ENCODE measurements at regions of chr2 and their contacts with region 1.

Region 1: GRCh38 chr2:27683390-27684071 is 19.8 kb downstream of the SLC4A1AP start:
- DNase-seq: peak; percentile 69 to 94 (median 85)
- ATAC-seq: peak; percentile 92
- H3K4me3 ChIP-seq: no peak overlapping the region
- H3K4me3 Mint-ChIP-seq: peak overlapping the region; percentile 35
- H3K27ac ChIP-seq: peak overlapping the region in 1 of 2 experiments; percentile 58
- H3K27ac Mint-ChIP-seq: peak overlapping the region; percentile 66
- H3K4me1 ChIP-seq: peaks cover 3% of the 10 kb centered on the region
- H3K4me1 Mint-ChIP-seq: peaks cover 23% of the 10 kb centered on the region
- H3K27me3 ChIP-seq: no peaks in the 10 kb centered on the region
- H3K27me3 Mint-ChIP-seq: no peaks in the 10 kb centered on the region
- CTCF ChIP-seq: peak; percentile 100

Region 2: GRCh38 chr2:27095745-27096651 is 587.5 kb before region 1 on chr2:
- CTCF ChIA-PET with region 1: interaction called, 3 read pairs
- POLR2A ChIA-PET with region 1: no interaction called
- intact Hi-C with region 1: loop called in 1 of 2 experiments (anchors 10 kb)
- DNase-seq: peak in 5 of 9 experiments; percentile 32 to 69 (median 57)
- ATAC-seq: peak; percentile 88
- H3K4me3 ChIP-seq: peak overlapping the region; percentile 21 to 42
- H3K4me3 Mint-ChIP-seq: peak overlapping the region; percentile 61
- H3K27ac ChIP-seq: no peak overlapping the region
- H3K27ac Mint-ChIP-seq: no peak overlapping the region
- H3K4me1 ChIP-seq: peaks cover 9% of the 10 kb centered on the region
- H3K4me1 Mint-ChIP-seq: peaks cover 11% of the 10 kb centered on the region
- H3K27me3 ChIP-seq: no peaks in the 10 kb centered on the region
- H3K27me3 Mint-ChIP-seq: no peaks in the 10 kb centered on the region
- CTCF ChIP-seq: no peak

Region 3: DNA sequence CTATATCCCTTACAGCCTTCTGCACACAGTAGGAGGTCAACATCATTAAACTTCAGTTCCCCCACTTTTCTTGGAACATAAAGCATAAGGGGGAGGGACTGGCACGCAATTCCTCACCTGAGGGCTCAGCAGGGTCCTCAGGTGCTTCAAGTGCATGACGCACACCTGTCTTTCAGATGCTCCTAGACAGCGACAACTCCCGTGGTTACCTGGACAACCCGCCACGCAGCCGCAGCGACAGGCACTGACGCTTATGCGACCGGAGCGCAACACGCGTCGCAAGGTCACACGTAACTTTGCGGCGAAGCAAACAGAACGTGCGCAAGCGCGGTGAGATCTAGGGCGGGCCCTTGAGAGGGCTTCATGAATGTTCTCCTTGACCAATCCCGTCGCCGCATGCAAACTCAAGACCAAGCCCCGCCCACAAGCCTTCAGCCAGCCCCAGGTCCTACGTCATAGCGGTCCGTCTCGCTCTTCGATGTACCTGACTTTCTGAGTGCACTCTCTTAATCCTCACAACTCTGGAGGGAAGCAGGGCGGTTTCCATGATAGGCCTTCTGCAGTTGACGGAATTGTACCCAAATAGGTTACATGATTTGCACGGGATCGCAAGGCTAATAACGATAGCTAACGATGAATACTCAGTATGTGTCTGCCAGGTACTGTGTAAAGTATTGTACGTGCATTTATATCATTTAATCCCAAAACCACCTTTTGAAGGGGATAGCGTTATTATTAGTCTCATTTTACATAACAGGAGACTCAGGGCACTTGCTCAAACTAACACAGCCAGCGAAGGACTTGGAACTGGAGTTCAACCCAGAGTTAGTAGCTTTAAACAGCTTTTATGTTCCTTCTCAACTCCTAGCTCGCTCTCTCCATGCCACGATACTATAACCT is 193.8 kb before region 1 on chr2 and contains the start of gene IFT172:
- CTCF ChIA-PET with region 1: no interaction called
- POLR2A ChIA-PET with region 1: no interaction called
- intact Hi-C with region 1: loop called in 1 of 2 experiments (anchors 5 kb)
- DNase-seq: peak; percentile 98 to 100 (median 99)
- ATAC-seq: peak; percentile 91
- H3K4me3 ChIP-seq: peak within 1 kb of the TSS; percentile 53 to 57
- H3K4me3 Mint-ChIP-seq: peak within 1 kb of the TSS; percentile 82
- H3K27ac ChIP-seq: peak within 1 kb of the TSS; percentile 85 to 90
- H3K27ac Mint-ChIP-seq: peak within 1 kb of the TSS; percentile 94
- H3K4me1 ChIP-seq: peaks cover 20% of the 10 kb centered on the region
- H3K4me1 Mint-ChIP-seq: peaks cover 21% of the 10 kb centered on the region
- H3K27me3 ChIP-seq: peaks cover 7 to 10% of the 10 kb centered on the region in 2 experiments
- H3K27me3 Mint-ChIP-seq: peaks cover 13% of the 10 kb centered on the region
- CTCF ChIP-seq: no peak
- total RNA-seq, gene IFT172: 15.0 to 17.2 TPM

Region 4: DNA sequence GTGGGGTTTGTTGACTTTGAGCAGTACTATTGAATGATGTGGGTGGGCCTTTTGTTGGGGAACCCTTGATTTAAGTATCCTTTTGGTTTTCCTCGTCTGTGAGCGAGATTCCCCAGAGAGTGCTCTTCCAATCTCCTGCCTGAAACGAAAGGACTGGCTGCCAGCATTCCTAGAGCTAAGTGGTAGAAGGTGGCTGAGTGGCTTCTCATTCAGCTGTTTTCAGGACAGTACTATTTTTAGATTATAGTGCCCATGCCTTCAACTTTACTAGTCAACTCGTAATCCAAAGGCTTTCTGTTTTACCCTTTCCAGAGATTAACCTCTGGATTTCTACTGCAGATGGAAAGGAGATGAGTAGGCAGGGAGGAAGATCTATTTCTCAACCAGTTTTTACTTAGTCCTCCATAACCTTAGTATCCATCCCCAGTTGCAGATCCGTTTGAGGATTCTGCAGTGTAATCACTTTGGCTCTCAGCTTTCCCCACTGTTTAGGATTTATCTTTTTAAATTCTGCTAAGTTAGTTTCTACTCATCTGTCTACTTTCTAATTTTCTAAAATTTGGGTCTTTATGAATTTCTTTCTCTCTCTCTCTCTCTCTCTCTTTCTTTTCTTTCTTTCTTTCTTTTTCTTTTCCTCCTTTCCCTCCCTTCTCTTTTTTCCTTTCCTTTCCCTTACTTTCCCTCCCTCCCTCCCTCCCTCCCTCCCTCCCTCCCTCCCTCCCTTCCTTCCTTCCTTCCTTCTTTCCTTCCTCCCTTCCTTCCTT is 10.6 kb before region 1 on chr2:
- CTCF ChIA-PET with region 1: interaction called, 49 read pairs
- POLR2A ChIA-PET with region 1: no interaction called
- intact Hi-C with region 1: no loop called
- DNase-seq: no peak
- ATAC-seq: no peak
- H3K4me3 ChIP-seq: no peak overlapping the region
- H3K4me3 Mint-ChIP-seq: no peak overlapping the region
- H3K27ac ChIP-seq: no peak overlapping the region
- H3K27ac Mint-ChIP-seq: no peak overlapping the region
- H3K4me1 ChIP-seq: no peaks in the 10 kb centered on the region
- H3K4me1 Mint-ChIP-seq: peaks cover 13% of the 10 kb centered on the region
- H3K27me3 ChIP-seq: no peaks in the 10 kb centered on the region
- H3K27me3 Mint-ChIP-seq: no peaks in the 10 kb centered on the region
- CTCF ChIP-seq: no peak

Region 5: DNA sequence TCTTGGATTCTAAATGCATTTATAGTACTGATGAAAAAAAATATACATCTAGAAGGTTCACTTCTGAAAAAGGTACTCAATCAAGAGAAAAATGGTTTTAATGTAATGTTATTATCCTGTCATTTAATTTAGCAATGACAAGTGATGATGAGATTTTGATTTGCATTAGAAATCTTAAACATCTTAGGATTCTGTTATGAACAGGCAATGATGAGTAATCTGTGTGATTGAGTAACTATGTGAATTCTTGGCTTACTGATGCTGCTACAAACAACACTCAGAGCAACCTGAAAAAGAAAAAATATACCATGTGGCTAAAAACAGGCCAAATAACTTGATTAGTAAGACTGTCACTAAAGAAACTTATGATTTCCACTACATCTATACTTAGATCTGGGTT is 176.6 kb after region 1 on chr2:
- CTCF ChIA-PET with region 1: no interaction called
- POLR2A ChIA-PET with region 1: no interaction called
- intact Hi-C with region 1: no loop called
- DNase-seq: no peak
- ATAC-seq: no peak
- H3K4me3 ChIP-seq: no peak overlapping the region
- H3K4me3 Mint-ChIP-seq: no peak overlapping the region
- H3K27ac ChIP-seq: no peak overlapping the region
- H3K27ac Mint-ChIP-seq: no peak overlapping the region
- H3K4me1 ChIP-seq: no peaks in the 10 kb centered on the region
- H3K4me1 Mint-ChIP-seq: no peaks in the 10 kb centered on the region
- H3K27me3 ChIP-seq: no peaks in the 10 kb centered on the region
- H3K27me3 Mint-ChIP-seq: peaks cover under 1% of the 10 kb centered on the region
- CTCF ChIP-seq: no peak

Measured in CD8-positive, alpha-beta T cell (primary cell).